ENCODE measurements at regions of chr6 and their contacts with region 1.

Region 1: GRCh38 chr6:10954590-10955010 is 67.7 kb downstream of the SYCP2L start:
- DNase-seq: peak; percentile 36
- H3K4me3 ChIP-seq: no peak overlapping the region
- CTCF ChIP-seq: peak; percentile 95

Region 2: DNA sequence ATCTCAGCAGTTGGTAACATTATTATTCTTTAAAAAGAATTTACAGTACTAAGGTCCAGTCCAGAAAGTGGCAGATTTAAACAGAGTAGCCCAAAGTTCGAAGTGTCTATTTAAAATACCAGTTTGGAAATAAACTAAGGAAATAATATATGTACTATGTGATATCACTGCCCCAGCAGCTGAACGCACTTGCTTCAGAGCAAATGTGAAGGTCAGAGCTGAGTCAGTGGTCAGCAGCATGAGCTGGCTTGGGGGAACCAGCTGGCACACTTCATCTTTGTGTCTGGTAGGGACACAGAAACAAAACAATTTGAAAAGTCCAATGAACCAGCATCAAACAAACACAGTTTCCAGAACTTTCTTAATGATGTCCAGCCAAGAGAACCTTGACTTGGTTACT is 191.6 kb before region 1 on chr6:
- CTCF ChIA-PET with region 1: no interaction called
- POLR2A ChIA-PET with region 1: no interaction called
- DNase-seq: no peak
- H3K4me3 ChIP-seq: no peak overlapping the region
- CTCF ChIP-seq: no peak

Region 3: GRCh38 chr6:10968776-10969175 is 14.2 kb after region 1 on chr6:
- CTCF ChIA-PET with region 1: interaction called, 29 read pairs
- POLR2A ChIA-PET with region 1: no interaction called
- DNase-seq: peak; percentile 67
- H3K4me3 ChIP-seq: no peak overlapping the region
- CTCF ChIP-seq: no peak

Region 4: GRCh38 chr6:11043961-11044711 is 89.5 kb after region 1 on chr6 and contains the start of gene ELOVL2:
- CTCF ChIA-PET with region 1: interaction called, 16 read pairs
- POLR2A ChIA-PET with region 1: no interaction called
- DNase-seq: no peak
- H3K4me3 ChIP-seq: peak within 1 kb of the TSS; percentile 62
- CTCF ChIP-seq: peak; percentile 71

Region 5: GRCh38 chr6:11064836-11065235 is 110.2 kb after region 1 on chr6:
- CTCF ChIA-PET with region 1: interaction called, 413 read pairs
- POLR2A ChIA-PET with region 1: no interaction called
- DNase-seq: no peak
- H3K4me3 ChIP-seq: no peak overlapping the region
- CTCF ChIP-seq: no peak

Region 6: GRCh38 chr6:11187301-11187700 is 232.7 kb after region 1 on chr6:
- CTCF ChIA-PET with region 1: no interaction called
- POLR2A ChIA-PET with region 1: no interaction called
- DNase-seq: no peak
- H3K4me3 ChIP-seq: no peak overlapping the region
- CTCF ChIP-seq: no peak

Region 7: GRCh38 chr6:11575408-11576033 is 620.9 kb after region 1 on chr6:
- CTCF ChIA-PET with region 1: interaction called, 89 read pairs
- POLR2A ChIA-PET with region 1: no interaction called
- DNase-seq: peak; percentile 41
- H3K4me3 ChIP-seq: no peak overlapping the region
- CTCF ChIP-seq: peak; percentile 90